ENCODE measurements at regions of chr20 and their contacts with region 1.

Region 1: DNA sequence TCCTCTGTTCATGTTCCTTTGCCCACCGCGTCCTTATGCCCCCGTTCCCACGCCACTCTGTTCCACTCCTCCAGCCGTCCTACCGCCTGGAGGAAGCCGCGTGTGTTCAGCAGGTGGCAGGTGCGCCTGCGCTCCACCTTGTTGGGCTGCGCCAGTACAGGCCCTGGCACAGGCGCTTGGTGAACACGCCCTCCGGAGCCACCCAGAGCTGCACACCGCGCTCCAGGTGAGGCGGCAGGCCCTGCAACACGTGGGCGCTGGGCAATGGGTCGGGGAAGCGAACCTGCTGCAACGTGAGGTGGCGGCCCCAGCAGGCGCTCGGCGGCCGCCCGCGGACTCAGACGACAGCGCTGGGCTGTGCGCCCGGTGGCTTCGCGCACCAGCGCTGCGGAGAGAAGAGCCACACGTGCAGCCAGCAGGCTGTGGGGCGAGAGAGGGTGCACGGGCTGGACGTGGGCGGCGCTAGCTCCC is 4.1 kb upstream of the FOXS1 start:
- DNase-seq: no peak
- ATAC-seq: no peak
- H3K4me3 ChIP-seq: no peak overlapping the region
- H3K27ac ChIP-seq: no peak overlapping the region
- H3K4me1 ChIP-seq: peaks cover 5% of the 10 kb centered on the region; the same call in 1 of the 2 replicates
- H3K27me3 ChIP-seq: no peaks in the 10 kb centered on the region; a peak in 2 of 4 replicates
- CTCF ChIP-seq: no peak
- EP300 ChIP-seq: no peak
- POLR2A ChIP-seq: no peak
- RAD21 ChIP-seq: no peak

Region 2: GRCh38 chr20:31770243-31770642 is 79.2 kb before region 1 on chr20:
- CTCF ChIA-PET with region 1: no interaction called
- POLR2A ChIA-PET with region 1: no interaction called
- RAD21 ChIA-PET with region 1: no interaction called
- SMC1A ChIA-PET with region 1: no interaction called
- in situ Hi-C with region 1: no loop called
- intact Hi-C with region 1: no loop called
- DNase-seq: no peak
- ATAC-seq: no peak
- H3K4me3 ChIP-seq: no peak overlapping the region
- H3K27ac ChIP-seq: no peak overlapping the region
- H3K4me1 ChIP-seq: no peaks in the 10 kb centered on the region
- H3K27me3 ChIP-seq: no peaks in the 10 kb centered on the region
- CTCF ChIP-seq: no peak
- EP300 ChIP-seq: no peak
- POLR2A ChIP-seq: no peak
- RAD21 ChIP-seq: no peak

Region 3: DNA sequence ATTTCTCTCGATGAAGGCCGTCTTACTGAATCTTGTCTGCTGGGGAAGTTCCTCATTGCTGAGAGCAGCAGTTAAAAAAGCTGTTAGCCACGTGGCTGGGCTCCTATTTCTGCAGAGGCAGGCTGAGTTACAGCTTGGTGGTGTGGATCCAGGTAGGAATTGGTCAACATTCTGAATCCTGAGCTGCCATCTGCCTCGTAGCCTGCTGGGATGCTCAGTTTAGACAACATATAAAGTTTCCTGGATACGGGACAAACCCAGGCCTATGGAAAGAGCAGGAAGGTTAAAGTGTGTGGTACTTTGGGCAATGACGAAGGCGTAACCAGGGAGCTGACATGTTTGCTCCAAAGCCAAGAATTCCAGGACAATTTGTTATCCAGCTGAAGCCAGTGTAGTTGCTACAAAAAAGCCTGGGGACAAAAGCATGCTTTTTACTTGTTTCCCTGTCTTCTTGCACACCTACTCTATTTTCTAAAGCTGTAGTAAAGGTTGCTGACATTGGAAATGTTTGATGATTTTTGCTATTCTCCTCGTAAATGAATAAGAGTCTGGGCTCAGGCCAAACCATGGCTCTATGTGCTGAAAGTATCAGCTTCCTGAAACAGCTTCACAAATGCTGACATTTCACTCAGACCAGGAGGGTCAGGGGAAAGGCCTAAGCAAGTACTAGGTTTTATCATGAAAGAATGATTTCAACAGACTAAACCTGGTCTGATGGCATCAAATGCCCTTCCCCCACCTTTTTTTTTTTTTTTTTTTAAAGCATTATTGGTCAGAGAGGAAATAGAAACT is 42.7 kb before region 1 on chr20:
- CTCF ChIA-PET with region 1: interaction called, 12 read pairs
- POLR2A ChIA-PET with region 1: no interaction called
- RAD21 ChIA-PET with region 1: no interaction called
- SMC1A ChIA-PET with region 1: no interaction called
- in situ Hi-C with region 1: no loop called
- intact Hi-C with region 1: no loop called
- DNase-seq: no peak
- ATAC-seq: no peak
- H3K4me3 ChIP-seq: no peak overlapping the region
- H3K27ac ChIP-seq: no peak overlapping the region
- H3K4me1 ChIP-seq: no peaks in the 10 kb centered on the region; the same call in 1 of the 2 replicates
- H3K27me3 ChIP-seq: no peaks in the 10 kb centered on the region
- CTCF ChIP-seq: no peak
- EP300 ChIP-seq: no peak
- POLR2A ChIP-seq: no peak
- RAD21 ChIP-seq: no peak

Region 4: DNA sequence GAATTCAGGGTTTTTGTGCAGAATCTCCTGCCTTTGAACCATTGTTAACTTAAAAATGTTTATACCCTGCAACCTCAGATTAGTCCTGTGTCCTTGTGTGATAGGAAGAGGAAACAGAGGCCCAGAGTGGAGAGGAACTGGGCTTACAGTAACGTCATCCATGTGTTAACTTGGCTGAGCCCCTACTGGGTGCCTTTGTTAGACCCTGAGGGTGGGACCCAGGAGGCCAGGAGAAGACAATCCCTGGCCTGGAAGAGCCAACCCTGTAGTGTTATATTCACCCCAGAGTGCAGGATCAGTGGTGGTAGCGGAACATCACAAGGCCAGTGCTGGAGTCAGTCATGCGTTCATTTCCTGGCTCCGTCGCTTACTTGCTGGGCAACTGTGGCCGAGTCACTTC is 19.8 kb before region 1 on chr20:
- CTCF ChIA-PET with region 1: interaction called, 109 read pairs
- POLR2A ChIA-PET with region 1: no interaction called
- RAD21 ChIA-PET with region 1: interaction called, 25 read pairs
- SMC1A ChIA-PET with region 1: interaction called, 3 read pairs
- in situ Hi-C with region 1: no loop called
- intact Hi-C with region 1: no loop called
- DNase-seq: no peak
- ATAC-seq: no peak
- H3K4me3 ChIP-seq: no peak overlapping the region
- H3K27ac ChIP-seq: no peak overlapping the region
- H3K4me1 ChIP-seq: no peaks in the 10 kb centered on the region
- H3K27me3 ChIP-seq: no peaks in the 10 kb centered on the region
- CTCF ChIP-seq: no peak
- EP300 ChIP-seq: no peak
- POLR2A ChIP-seq: no peak
- RAD21 ChIP-seq: no peak

Region 5: GRCh38 chr20:31861346-31862156 is 12.1 kb after region 1 on chr20:
- CTCF ChIA-PET with region 1: interaction called, 22 read pairs
- POLR2A ChIA-PET with region 1: no interaction called
- RAD21 ChIA-PET with region 1: interaction called, 3 read pairs
- SMC1A ChIA-PET with region 1: interaction called, 10 read pairs
- in situ Hi-C with region 1: no loop called
- intact Hi-C with region 1: no loop called
- DNase-seq: no peak
- ATAC-seq: peak; percentile 93
- H3K4me3 ChIP-seq: peak overlapping the region; percentile 53
- H3K27ac ChIP-seq: no peak overlapping the region
- H3K4me1 ChIP-seq: peaks cover 10% of the 10 kb centered on the region
- H3K27me3 ChIP-seq: peaks cover 0 to 9% of the 10 kb centered on the region in 2 experiments; a peak in 1 of 4 replicates
- CTCF ChIP-seq: no peak
- EP300 ChIP-seq: no peak
- POLR2A ChIP-seq: peak; percentile 62; the same call in 1 of the 2 replicates
- RAD21 ChIP-seq: no peak

Region 6: DNA sequence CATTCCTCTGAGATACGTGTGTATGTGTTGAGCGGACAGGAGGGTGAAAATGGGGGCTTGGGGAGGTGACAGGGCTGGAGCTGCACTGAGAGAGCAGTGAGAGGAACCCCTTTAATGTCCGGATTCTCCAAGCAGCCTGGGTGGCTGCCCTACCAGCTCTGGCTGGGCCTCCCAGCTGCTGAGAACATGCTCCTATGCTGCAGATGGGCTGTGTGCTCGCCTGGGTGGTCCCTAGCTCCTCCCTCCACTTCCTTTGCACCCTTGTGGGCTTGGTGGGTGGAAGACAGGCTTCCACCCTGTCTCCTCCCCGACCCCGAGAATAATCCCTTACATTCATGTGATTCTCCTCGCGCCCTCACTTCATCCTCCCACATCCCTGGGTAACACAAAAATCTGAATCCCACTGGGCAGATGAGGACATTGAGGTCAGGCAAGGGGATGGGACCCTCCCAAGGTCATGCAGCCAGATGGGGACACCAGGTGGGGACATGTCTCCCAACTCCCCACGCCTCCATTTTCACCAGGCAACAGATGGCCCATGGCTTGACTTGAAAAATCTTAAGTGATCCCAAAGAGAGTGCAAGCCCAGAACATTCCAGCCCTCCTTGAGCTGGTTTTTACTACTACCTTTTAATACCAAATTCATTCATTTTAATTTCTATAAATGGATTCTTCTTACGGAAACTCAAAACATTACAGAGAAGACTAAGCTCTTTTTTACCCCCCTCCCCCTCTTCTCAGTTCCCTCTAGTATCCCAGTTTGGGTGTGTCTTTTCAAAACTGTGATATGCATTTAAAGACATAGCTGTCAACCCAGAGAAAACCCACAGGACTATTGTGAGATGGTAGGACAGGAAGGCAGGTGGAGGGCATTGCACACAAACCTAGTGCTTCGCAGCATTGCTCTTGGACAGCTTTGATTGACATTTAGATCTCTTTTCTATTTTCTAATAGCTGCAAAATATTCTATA is 107.4 kb after region 1 on chr20:
- CTCF ChIA-PET with region 1: interaction called, 307 read pairs
- POLR2A ChIA-PET with region 1: interaction called, 10 read pairs
- RAD21 ChIA-PET with region 1: interaction called, 248 read pairs
- SMC1A ChIA-PET with region 1: interaction called, 181 read pairs
- in situ Hi-C with region 1: no loop called
- intact Hi-C with region 1: loop called (anchors 1 kb)
- DNase-seq: no peak
- ATAC-seq: no peak
- H3K4me3 ChIP-seq: no peak overlapping the region
- H3K27ac ChIP-seq: no peak overlapping the region
- H3K4me1 ChIP-seq: no peaks in the 10 kb centered on the region
- H3K27me3 ChIP-seq: no peaks in the 10 kb centered on the region; a peak in 2 of 4 replicates
- CTCF ChIP-seq: no peak
- EP300 ChIP-seq: no peak
- POLR2A ChIP-seq: no peak
- RAD21 ChIP-seq: no peak

Region 7: GRCh38 chr20:32277361-32278198 is 428.1 kb after region 1 on chr20 and contains the start of gene KIF3B:
- CTCF ChIA-PET with region 1: no interaction called
- POLR2A ChIA-PET with region 1: no interaction called
- RAD21 ChIA-PET with region 1: no interaction called
- SMC1A ChIA-PET with region 1: no interaction called
- in situ Hi-C with region 1: no loop called
- intact Hi-C with region 1: no loop called
- DNase-seq: peak; percentile 61
- ATAC-seq: peak; percentile 84
- H3K4me3 ChIP-seq: peak within 1 kb of the TSS; percentile 98
- H3K27ac ChIP-seq: peak within 1 kb of the TSS; percentile 81
- H3K4me1 ChIP-seq: peaks cover 11% of the 10 kb centered on the region
- H3K27me3 ChIP-seq: no peaks in the 10 kb centered on the region
- CTCF ChIP-seq: no peak
- EP300 ChIP-seq: no peak; a peak in 1 of 4 replicates
- POLR2A ChIP-seq: peak; percentile 57; the same call in 1 of the 2 replicates
- RAD21 ChIP-seq: no peak
- polyA plus RNA-seq, gene KIF3B: 10.7 to 11.2 TPM

Region 8: DNA sequence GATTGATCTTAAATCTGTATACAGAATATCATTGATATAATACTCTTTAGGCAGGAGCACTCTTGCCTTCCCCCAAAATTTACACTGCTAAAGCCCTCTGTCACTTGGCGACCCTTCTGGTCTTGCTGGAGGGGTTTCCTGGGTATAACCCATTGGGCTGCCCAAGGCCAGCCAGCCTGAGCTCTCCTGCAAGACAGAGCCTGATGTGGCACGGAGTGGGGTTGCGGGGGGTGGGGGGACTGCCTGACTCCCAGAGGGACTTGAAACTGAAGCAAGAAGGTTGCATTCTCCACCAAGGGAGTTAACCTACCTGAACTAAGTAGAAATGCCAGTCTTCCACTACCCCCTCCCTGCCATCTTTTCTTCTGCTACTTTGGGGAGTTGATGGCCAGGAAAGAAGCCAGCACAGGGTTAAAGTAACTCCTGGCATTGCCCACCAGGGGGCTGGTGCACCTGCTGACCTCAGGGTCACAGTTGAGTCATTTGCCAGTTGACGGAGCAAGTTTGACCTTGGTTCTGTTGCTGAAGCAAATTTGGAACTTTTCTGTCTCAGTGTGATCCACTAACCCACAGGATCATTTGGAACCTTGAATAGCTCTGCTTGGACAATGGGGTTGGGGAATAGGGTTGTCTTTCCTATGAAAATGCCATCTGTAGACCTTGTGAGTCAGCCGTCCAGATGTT is 588.0 kb after region 1 on chr20:
- CTCF ChIA-PET with region 1: no interaction called
- POLR2A ChIA-PET with region 1: no interaction called
- RAD21 ChIA-PET with region 1: no interaction called
- SMC1A ChIA-PET with region 1: no interaction called
- in situ Hi-C with region 1: no loop called
- intact Hi-C with region 1: no loop called
- DNase-seq: no peak
- ATAC-seq: peak; percentile 53
- H3K4me3 ChIP-seq: no peak overlapping the region
- H3K27ac ChIP-seq: no peak overlapping the region
- H3K4me1 ChIP-seq: no peaks in the 10 kb centered on the region
- H3K27me3 ChIP-seq: no peaks in the 10 kb centered on the region
- CTCF ChIP-seq: peak in 2 of 3 experiments; percentile 13 to 41; a peak in 3 of 6 replicates
- EP300 ChIP-seq: no peak
- POLR2A ChIP-seq: no peak
- RAD21 ChIP-seq: no peak